Activated CD8-positive, alpha-beta T cell treated with anti-CD3 and anti-CD28 coated beads, Interleukin-2, amount 10 ng/mL, durations not matched to agents 7 days and 5 days (primary cell): ENCODE measurements at regions of chr11 and their contacts with region 1.

Region 1: DNA sequence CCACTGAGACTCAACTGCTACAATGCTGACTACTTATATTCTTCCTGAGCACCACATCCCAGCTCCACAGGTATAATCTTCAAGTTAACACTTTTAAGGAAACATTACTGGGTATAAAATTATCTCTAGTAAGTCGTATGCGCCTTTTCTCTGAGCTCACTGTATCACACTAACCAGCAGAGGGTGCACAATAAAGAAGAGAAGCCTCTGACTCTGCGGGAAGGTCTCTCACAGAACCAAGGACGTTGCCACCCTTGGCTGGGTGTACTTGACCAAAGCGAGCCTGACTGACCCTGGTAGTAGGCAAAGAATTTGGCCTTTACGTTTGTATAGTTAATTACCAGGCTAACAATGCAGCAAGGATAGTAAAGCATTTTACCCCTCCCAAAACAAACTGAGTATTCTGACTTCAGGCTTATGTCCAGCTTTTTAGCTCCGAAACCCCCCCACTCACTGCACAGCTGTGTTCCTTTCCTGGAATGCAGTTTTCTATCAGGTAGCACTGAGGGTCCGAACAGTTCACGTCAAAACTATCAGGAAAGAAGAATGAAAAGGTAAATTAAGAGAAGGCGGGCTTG is at the start of gene BTBD18:
- DNase-seq: no peak
- ATAC-seq: peak; percentile 41
- H3K4me3 Mint-ChIP-seq: no peak within 1 kb of the TSS
- H3K27ac Mint-ChIP-seq: no peak within 1 kb of the TSS
- H3K4me1 Mint-ChIP-seq: peaks cover 21% of the 10 kb centered on the region
- H3K27me3 Mint-ChIP-seq: no peaks in the 10 kb centered on the region
- total RNA-seq, gene BTBD18: not detected

Region 2: DNA sequence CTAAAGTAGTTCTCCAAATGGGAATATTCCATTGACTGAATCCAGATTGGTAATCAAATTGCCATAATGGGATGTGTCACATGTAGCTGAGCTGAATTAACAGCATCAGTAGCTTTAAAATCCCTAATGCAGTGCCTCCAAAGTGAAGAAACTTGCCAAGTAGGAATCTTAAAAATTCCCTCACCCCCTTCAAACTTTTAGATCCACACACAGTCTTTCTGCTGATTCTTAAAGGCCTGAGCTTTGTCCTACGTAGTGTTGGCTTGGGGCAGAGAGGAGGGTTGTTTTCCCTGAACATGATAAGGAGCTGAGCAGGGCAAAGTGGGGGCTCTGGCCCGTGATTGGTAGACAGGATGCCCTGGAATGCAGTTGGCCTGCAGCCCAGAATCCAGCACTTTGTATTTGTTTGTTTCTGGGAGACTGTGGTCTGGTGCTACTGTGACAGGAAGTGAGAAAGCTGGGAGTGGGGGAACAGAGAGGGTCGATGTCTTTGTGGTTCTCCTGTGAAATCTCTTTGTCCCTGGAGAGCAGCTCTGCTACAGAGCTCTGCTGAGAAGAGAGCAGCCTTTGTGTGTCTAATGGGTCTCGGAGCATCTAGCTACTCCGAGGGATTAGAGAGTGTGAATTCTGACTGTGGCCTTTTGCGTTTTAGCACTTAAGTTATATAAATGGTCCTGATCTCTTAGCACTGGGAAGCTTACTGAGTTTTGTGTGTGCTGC is 26.7 kb after region 1 on chr11:
- CTCF ChIA-PET with region 1: interaction called, 10 read pairs
- POLR2A ChIA-PET with region 1: no interaction called
- DNase-seq: no peak
- ATAC-seq: no peak
- H3K4me3 Mint-ChIP-seq: no peak overlapping the region
- H3K27ac Mint-ChIP-seq: no peak overlapping the region
- H3K4me1 Mint-ChIP-seq: peaks cover 46% of the 10 kb centered on the region
- H3K27me3 Mint-ChIP-seq: no peaks in the 10 kb centered on the region

Region 3: DNA sequence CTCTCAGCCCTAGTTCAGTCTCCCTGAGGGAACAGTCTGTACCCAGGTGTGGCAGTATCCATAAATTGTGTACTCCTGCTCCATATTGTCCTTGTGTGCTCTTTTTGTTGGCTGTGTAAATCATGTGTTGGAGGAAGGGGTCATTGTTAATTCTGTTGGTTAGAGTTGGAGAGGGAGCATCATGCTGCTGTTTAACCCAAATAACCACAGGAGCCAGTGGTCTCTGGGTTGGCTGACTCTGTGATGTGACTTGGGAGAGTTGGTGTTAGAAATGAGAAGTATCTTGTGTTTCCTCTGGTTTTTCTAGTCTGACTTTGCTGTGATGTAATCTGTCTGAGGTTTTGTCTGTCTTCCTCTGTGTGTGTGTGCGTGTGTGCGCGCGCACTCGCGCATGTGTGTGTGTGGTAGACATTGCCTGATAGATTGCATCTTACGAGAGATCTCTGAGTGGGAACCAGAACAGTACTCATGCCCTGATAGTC is 40.3 kb after region 1 on chr11:
- CTCF ChIA-PET with region 1: interaction called, 10 read pairs
- POLR2A ChIA-PET with region 1: no interaction called
- DNase-seq: peak; percentile 91
- ATAC-seq: peak; percentile 93
- H3K4me3 Mint-ChIP-seq: peak overlapping the region; percentile 52
- H3K27ac Mint-ChIP-seq: peak overlapping the region; percentile 96
- H3K4me1 Mint-ChIP-seq: peaks cover 65% of the 10 kb centered on the region
- H3K27me3 Mint-ChIP-seq: no peaks in the 10 kb centered on the region